Activated CD4-positive, alpha-beta T cell treated with anti-CD3 and anti-CD28 coated beads for 36 hours (primary cell): ENCODE measurements at regions of chr7 and their contacts with region 1.

Region 1: DNA sequence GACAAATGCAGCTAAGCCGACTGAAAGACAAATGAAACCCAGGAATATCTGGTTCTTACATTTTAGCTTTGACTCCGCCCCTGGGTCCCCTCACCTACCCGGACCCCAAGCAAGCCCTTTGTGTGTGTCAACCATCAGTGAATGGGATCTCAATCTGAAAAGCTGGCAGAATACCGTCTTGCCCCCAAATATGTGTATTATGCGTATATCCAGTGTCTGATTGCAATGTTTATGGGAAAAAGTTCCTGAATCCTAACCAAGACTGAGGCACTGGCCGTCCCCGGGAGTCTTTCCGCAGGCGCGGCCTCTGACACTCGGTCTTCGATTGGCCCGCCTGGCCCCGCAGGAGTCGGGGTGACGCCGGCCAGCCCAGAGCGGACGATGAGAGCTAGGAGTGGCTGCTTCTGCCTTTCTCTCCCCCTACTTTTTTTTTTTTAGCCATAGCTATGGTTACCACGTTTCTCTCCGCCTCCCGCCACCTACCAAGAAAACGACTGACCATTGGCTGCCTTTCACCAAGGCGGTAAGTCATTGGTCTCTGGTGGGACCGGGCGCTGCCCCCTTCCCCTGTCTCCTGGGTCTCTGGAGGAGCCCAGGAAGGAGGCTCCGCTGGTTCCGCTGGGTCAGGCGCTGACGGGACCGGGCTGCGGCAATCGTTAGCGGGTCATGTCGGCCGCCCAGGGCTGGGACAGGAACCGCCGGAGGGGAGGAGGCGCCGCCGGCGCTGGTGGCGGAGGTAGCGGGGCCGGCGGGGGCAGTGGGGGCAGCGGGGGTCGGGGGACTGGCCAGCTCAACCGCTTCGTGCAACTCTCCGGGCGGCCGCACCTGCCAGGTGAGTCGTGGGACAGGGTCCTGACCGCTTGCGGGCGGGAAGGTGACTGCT is at the start of gene KLHDC10:
- DNase-seq: peak; percentile 97
- ATAC-seq: peak; percentile 98
- H3K4me3 Mint-ChIP-seq: peak within 1 kb of the TSS; percentile 91
- H3K27ac Mint-ChIP-seq: peak within 1 kb of the TSS; percentile 90
- H3K4me1 Mint-ChIP-seq: peaks cover 32% of the 10 kb centered on the region
- H3K27me3 Mint-ChIP-seq: no peaks in the 10 kb centered on the region
- total RNA-seq, gene KLHDC10: 13.5 to 14.2 TPM

Region 2: GRCh38 chr7:129561677-129562359 is 508.4 kb before region 1 on chr7:
- CTCF ChIA-PET with region 1: no interaction called
- POLR2A ChIA-PET with region 1: no interaction called
- intact Hi-C with region 1: no loop called
- DNase-seq: no peak
- ATAC-seq: no peak
- H3K4me3 Mint-ChIP-seq: no peak overlapping the region
- H3K27ac Mint-ChIP-seq: no peak overlapping the region
- H3K4me1 Mint-ChIP-seq: peaks cover 3% of the 10 kb centered on the region
- H3K27me3 Mint-ChIP-seq: peaks cover 13% of the 10 kb centered on the region

Region 3: DNA sequence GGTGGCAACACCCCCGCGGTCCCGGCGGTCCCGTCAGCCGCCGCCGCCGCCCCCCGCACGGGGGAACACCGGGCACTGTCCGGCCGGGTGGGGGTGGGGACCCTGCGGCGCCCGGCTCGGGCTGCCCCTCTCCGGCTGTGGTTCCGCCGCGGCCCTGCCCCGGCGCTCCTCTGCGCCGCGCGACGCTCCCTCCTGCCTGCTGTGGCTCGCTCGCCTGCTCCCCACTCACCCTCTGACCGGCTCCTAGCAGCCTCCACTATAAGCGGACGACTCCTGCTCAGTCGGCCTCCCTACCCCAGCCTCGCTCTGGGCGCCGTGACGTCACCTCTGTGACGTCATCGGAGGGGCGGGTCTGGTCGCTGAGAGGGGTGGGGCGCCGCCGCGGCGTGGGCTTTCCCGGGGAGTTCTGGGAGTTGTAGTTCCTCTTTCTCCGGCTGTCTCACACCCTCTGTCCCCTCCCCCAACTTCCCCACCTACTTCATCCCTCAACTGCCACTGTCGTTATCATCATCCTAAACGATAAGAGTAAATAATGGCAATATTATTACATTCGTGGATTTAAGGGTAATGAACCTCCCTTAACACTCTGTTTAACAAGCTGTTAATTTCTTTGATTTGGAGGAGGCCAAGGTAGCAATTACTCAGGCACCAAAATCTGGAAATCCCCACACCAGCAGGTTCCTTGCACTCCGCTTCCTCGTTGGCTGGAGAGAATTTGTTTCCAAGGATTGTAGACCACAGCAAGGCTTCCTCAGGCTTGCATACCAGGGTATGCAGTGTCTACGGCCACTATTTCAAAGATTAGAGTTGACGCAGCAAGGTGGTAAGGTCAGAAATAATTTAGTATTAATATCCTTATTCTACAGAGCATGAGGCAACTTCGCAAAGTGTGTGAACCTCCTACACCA is 117.3 kb before region 1 on chr7 and contains the start of gene UBE2H:
- CTCF ChIA-PET with region 1: no interaction called
- POLR2A ChIA-PET with region 1: no interaction called
- intact Hi-C with region 1: loop called in 1 of 2 experiments (anchors 1 kb)
- DNase-seq: peak; percentile 96
- ATAC-seq: peak; percentile 66
- H3K4me3 Mint-ChIP-seq: no peak within 1 kb of the TSS
- H3K27ac Mint-ChIP-seq: peak within 1 kb of the TSS; percentile 99
- H3K4me1 Mint-ChIP-seq: peaks cover 8% of the 10 kb centered on the region
- H3K27me3 Mint-ChIP-seq: no peaks in the 10 kb centered on the region
- total RNA-seq, gene UBE2H: 25.6 to 40.7 TPM

Region 4: GRCh38 chr7:130141161-130141883 is 71.1 kb after region 1 on chr7:
- CTCF ChIA-PET with region 1: interaction called, 3 read pairs
- POLR2A ChIA-PET with region 1: no interaction called
- intact Hi-C with region 1: loop called in 1 of 2 experiments (anchors 5 kb)
- DNase-seq: peak; percentile 80
- ATAC-seq: peak; percentile 84
- H3K4me3 Mint-ChIP-seq: peak overlapping the region; percentile 42
- H3K27ac Mint-ChIP-seq: peak overlapping the region; percentile 67
- H3K4me1 Mint-ChIP-seq: peaks cover 4% of the 10 kb centered on the region
- H3K27me3 Mint-ChIP-seq: no peaks in the 10 kb centered on the region

Region 5: DNA sequence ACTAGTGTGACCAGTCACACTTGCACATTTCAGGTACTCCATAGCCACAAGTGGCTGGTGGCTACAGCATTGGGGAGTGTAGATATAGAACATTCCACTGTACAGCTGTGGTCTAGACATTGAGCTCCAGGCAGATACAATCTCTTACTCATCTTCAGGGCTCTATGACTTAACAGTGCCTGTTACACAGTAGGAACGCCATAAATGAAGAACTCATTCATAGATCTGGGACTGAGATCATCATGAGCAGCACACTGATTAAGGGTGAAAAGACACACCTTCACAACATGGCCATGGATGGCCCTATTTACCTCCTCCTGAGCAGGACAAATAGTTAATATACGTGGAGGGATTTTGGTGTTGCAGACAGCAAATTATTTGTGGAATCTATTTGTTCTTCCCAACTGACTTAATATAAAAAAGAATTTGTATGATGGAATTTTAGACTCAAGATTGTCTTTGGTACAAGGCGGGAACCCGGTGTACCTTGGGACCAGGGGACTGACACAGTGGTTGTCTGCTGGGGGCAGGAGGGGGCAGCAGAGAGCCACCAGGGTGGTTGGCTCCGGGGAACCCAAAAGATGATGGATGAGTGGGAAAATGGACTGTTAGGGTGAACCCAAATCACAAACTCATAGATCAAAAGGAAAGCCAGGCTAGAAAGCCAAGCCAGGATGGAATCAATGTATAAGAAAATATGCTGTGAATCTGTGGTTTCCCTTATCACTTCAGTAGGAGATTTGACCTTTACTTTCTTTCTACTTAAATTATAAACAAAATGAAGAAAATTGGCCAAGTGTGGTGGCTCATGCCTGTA is 172.2 kb after region 1 on chr7:
- CTCF ChIA-PET with region 1: no interaction called
- POLR2A ChIA-PET with region 1: no interaction called
- intact Hi-C with region 1: loop called in 1 of 2 experiments (anchors 2 kb)
- DNase-seq: peak; percentile 81
- ATAC-seq: peak; percentile 90
- H3K4me3 Mint-ChIP-seq: no peak overlapping the region
- H3K27ac Mint-ChIP-seq: no peak overlapping the region
- H3K4me1 Mint-ChIP-seq: peaks cover 15% of the 10 kb centered on the region
- H3K27me3 Mint-ChIP-seq: no peaks in the 10 kb centered on the region

Region 6: DNA sequence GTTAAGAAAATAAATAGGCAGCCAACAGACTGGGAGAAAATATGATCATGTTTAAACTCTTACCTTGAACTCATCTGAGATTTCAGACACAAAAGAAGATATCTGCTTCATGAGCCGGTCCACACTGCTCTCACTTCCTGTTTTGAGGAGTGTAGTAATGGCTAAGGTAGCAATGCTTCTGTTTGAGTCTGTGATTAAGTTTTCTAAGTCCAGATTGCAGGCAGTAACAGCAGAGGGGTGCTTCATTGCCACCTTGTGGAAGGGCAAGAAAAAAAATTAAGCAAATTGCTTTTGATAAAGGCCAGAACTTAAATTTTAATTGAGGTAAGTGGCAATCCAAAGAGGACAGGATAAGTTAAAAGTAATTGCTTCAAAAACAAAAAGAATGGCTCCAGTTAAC is 490.8 kb after region 1 on chr7:
- CTCF ChIA-PET with region 1: no interaction called
- POLR2A ChIA-PET with region 1: no interaction called
- intact Hi-C with region 1: loop called in 1 of 2 experiments (anchors 5 kb)
- DNase-seq: peak; percentile 17
- ATAC-seq: peak; percentile 44
- H3K4me3 Mint-ChIP-seq: no peak overlapping the region
- H3K27ac Mint-ChIP-seq: no peak overlapping the region
- H3K4me1 Mint-ChIP-seq: no peaks in the 10 kb centered on the region
- H3K27me3 Mint-ChIP-seq: no peaks in the 10 kb centered on the region

Region 7: DNA sequence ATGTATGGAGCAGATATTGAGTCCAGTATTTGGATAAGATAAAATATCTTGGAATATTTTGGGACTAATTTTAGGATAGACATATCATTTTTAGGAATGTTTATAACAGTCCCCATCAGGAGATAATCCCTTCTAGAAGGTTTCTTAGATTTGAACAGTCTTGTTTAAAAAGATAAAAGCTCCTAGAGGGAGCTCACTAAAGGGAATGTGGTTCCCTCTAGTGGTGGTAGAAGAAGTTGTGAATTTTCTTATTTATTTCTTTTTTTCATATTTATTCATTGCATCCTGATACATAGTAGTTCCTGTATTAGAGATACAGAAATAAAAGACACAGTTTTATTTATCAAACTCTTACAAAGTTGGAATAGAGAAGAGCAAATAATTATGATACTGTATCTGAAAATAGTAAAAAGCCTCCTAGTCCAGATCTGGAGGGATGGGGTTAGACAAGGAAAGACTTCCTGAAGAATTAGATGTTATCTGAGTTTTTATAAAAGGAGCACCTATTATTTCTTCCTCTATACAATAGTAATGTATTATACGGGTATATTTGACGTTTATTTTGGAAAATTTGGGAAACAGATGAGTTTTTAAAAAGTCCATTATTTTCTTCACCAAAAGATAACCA is 688.3 kb after region 1 on chr7:
- CTCF ChIA-PET with region 1: interaction called, 26 read pairs
- POLR2A ChIA-PET with region 1: no interaction called
- intact Hi-C with region 1: loop called (anchors 1 kb)
- DNase-seq: no peak
- ATAC-seq: no peak
- H3K4me3 Mint-ChIP-seq: no peak overlapping the region
- H3K27ac Mint-ChIP-seq: no peak overlapping the region
- H3K4me1 Mint-ChIP-seq: no peaks in the 10 kb centered on the region
- H3K27me3 Mint-ChIP-seq: peaks cover 2% of the 10 kb centered on the region